Pancreas (tissue), 10 donors: ENCODE measurements at regions of chr1 and their contacts with region 1.

Region 1: DNA sequence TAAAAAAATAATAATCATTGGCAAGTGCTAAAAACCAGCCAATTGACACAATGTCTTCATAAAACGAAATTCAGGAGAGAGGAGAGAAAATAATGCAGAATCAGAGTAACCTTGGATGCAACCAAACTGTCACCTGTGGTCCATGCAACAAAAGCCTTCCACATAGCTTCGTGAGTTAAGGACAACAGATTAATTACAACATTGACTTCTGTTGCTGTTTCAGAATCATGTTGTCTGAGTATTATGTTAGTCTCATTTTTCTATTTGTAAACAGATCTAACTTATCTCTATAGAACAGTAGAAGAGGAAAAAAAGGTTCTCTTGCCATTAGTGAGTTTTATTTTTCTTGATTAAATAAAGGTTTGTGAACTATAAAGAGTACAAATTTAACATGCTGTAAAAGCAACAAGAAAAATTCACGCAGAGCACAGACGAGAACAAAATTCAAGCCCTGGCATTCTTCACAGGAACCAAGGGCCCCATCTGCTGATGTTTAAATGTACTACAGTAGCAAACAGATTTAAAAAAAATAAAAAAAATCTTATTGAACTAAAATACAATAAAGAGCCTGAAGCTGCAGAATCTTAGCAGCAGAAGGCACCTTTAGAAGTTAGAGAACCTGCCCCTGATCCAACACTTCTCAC is 381.1 kb upstream of the PKN2 start:
- DNase-seq: peak in 3 of 6 donors; percentile 11 to 15 (median 13)
- ATAC-seq: peak; percentile 58 to 94 (median 88)
- H3K4me3 ChIP-seq: no peak overlapping the region
- H3K27ac ChIP-seq: no peak overlapping the region
- H3K4me1 ChIP-seq: no peaks in the 10 kb centered on the region
- H3K27me3 ChIP-seq: no peaks in the 10 kb centered on the region
- CTCF ChIP-seq: peak in 3 of 4 donors; percentile 40 to 51 (median 40)

Region 2: GRCh38 chr1:87292684-87293493 is 1010.1 kb before region 1 on chr1:
- intact Hi-C with region 1: loop called in 1 of 3 experiments (anchors 10 kb)
- DNase-seq: peak in 3 of 6 donors; percentile 18 to 37 (median 23)
- ATAC-seq: peak; percentile 53 to 75 (median 68)
- H3K4me3 ChIP-seq: no peak overlapping the region
- H3K27ac ChIP-seq: no peak overlapping the region
- H3K4me1 ChIP-seq: no peaks in the 10 kb centered on the region
- H3K27me3 ChIP-seq: no peaks in the 10 kb centered on the region
- CTCF ChIP-seq: peak; percentile 41 to 74 (median 64)

Region 3: GRCh38 chr1:88180449-88181108 is 122.4 kb before region 1 on chr1:
- intact Hi-C with region 1: loop called in 2 of 3 experiments (anchors 5 to 10 kb)
- DNase-seq: peak; percentile 71 to 80 (median 75)
- ATAC-seq: peak; percentile 82 to 93 (median 91)
- H3K4me3 ChIP-seq: no peak overlapping the region
- H3K27ac ChIP-seq: no peak overlapping the region
- H3K4me1 ChIP-seq: peaks cover 0 to 13% (median 9%) of the 10 kb centered on the region in 3 donors
- H3K27me3 ChIP-seq: no peaks in the 10 kb centered on the region
- CTCF ChIP-seq: peak; percentile 80 to 91 (median 86)

Region 4: DNA sequence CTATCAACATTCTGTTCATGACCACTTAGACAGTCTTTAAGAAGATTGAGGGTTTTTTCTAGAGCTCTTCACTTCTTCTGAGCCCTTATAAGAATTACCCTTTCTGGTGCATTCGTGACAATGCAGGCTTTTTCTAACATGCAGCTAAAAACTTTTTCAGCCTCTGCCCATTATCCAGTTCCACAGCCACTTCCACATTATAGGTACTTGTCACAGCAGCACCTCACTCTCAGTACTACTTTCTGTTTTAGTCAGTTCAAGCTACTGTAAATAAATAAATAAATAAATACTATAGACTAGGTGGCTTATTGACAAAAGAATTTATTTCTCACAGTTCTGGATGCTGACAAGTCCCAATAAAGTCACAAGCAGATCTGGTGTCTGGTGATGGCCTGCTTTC is 96.7 kb after region 1 on chr1:
- intact Hi-C with region 1: no loop called
- DNase-seq: no peak
- ATAC-seq: no peak
- H3K4me3 ChIP-seq: no peak overlapping the region
- H3K27ac ChIP-seq: no peak overlapping the region
- H3K4me1 ChIP-seq: no peaks in the 10 kb centered on the region
- H3K27me3 ChIP-seq: no peaks in the 10 kb centered on the region
- CTCF ChIP-seq: no peak